ENCODE measurements at regions of chr1 and their contacts with region 1.

Region 1: GRCh38 chr1:42924082-42924850 is 34.4 kb downstream of the SLC2A1 start:
- DNase-seq: peak; percentile 44
- H3K4me3 ChIP-seq: peak overlapping the region; percentile 51
- H3K27me3 ChIP-seq: no peaks in the 10 kb centered on the region
- CTCF ChIP-seq: peak; percentile 31

Region 2: DNA sequence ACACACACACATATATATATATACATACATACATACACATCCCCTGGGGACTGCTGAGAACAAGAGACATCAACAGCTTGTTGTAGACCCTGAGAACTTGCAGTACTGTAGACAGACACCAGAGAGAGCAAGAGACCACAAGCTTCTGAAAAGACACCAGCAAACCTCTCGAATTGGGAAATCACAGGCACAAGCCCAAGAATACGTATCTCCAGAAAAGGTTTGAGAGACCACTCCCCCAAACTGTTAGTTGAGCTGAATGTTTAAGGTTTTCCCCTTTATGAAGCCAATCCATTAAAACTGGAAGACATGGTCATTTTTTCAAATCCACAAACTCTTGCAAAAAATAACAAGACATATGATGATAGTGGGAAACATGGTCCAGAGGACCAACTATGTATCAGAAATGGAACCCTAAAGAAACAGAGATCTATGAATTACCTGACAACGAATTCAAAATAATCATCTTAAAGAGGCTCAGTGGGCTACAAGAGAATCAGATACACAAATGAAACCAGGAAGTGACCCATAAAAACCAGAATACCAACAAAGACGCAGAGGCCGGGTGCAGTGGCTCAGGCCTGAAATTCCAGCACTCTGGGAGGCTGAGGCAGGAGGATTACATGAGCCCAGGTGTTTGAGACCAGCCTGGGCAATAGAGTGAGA is 10.7 kb before region 1 on chr1:
- CTCF ChIA-PET with region 1: interaction called, 65 read pairs
- POLR2A ChIA-PET with region 1: no interaction called
- DNase-seq: peak; percentile 35
- H3K4me3 ChIP-seq: no peak overlapping the region
- H3K27me3 ChIP-seq: no peaks in the 10 kb centered on the region
- CTCF ChIP-seq: peak; percentile 83

Region 3: DNA sequence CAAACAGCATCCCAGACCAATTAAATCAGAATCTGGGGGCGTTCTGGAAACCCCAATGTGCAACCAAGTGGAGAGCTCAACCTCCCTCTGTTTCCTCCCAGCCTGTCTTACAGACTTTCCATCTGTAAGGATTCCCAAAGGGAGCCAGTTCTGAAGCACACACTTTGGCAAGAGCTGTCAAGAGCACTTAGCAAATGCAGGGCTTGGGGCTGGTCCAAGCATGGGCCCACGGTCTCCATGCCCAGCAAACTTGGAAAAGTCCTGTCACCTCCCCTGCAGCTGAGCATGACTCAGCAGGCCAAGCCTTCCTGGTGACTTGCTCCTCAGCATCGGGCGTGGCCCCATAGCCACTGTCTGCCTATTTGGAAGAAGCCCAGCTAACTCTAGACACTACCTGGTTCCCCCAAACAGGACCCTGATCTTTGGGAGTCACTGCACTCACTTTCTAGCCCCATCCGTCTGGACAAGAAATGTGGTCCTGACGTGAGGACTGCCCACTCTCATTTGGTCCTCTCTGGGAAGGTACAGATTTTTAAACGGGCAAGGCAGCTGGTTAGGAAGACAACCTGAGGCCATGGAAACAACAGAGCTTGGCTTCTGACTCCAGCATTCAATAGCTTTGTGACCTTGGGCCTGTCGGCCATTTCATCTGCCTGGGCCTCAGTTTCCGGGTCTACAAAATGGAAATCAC is 17.5 kb after region 1 on chr1:
- CTCF ChIA-PET with region 1: interaction called, 10 read pairs
- POLR2A ChIA-PET with region 1: no interaction called
- DNase-seq: peak; percentile 86
- H3K4me3 ChIP-seq: no peak overlapping the region
- H3K27me3 ChIP-seq: no peaks in the 10 kb centered on the region
- CTCF ChIP-seq: no peak

Region 4: GRCh38 chr1:42957577-42958487 is 33.6 kb after region 1 on chr1:
- CTCF ChIA-PET with region 1: interaction called, 12 read pairs
- POLR2A ChIA-PET with region 1: no interaction called
- DNase-seq: no peak
- H3K4me3 ChIP-seq: peak overlapping the region; percentile 87
- H3K27me3 ChIP-seq: no peaks in the 10 kb centered on the region
- CTCF ChIP-seq: no peak